Mammary epithelial cell (primary cell): ENCODE measurements at regions of chr20 and their contacts with region 1.

Region 1: GRCh38 chr20:56400090-56400542 is 7.7 kb downstream of the CSTF1 start:
- DNase-seq: peak; percentile 34
- H3K4me3 ChIP-seq: no peak overlapping the region
- H3K27ac ChIP-seq: no peak overlapping the region
- H3K4me1 ChIP-seq: no peaks in the 10 kb centered on the region
- H3K27me3 ChIP-seq: no peaks in the 10 kb centered on the region
- CTCF ChIP-seq: peak; percentile 82 to 88

Region 2: DNA sequence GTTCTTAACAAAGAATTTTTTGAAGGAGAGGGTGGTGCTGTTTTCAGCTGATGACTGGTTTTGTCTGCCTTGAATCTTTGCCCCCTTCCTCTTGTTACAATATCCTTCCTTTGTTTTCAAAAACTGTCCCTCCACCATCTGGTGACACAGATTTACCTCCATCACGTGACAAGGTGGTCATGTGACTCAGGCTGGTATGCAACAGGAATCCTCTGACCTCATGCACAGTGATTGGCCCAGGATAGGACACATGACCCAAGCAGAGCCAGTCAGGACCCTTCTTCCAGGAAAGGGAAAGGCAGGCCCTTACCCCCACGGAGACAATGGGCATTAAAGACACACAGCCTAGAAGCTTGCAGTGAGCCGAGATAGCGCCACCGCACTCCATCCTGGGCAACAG is 236.3 kb before region 1 on chr20:
- CTCF ChIA-PET with region 1: no interaction called
- dilution Hi-C with region 1: no loop called
- in situ Hi-C with region 1: no loop called
- intact Hi-C with region 1: no loop called
- DNase-seq: no peak
- H3K4me3 ChIP-seq: no peak overlapping the region
- H3K27ac ChIP-seq: no peak overlapping the region
- H3K4me1 ChIP-seq: no peaks in the 10 kb centered on the region
- H3K27me3 ChIP-seq: no peaks in the 10 kb centered on the region
- CTCF ChIP-seq: no peak

Region 3: DNA sequence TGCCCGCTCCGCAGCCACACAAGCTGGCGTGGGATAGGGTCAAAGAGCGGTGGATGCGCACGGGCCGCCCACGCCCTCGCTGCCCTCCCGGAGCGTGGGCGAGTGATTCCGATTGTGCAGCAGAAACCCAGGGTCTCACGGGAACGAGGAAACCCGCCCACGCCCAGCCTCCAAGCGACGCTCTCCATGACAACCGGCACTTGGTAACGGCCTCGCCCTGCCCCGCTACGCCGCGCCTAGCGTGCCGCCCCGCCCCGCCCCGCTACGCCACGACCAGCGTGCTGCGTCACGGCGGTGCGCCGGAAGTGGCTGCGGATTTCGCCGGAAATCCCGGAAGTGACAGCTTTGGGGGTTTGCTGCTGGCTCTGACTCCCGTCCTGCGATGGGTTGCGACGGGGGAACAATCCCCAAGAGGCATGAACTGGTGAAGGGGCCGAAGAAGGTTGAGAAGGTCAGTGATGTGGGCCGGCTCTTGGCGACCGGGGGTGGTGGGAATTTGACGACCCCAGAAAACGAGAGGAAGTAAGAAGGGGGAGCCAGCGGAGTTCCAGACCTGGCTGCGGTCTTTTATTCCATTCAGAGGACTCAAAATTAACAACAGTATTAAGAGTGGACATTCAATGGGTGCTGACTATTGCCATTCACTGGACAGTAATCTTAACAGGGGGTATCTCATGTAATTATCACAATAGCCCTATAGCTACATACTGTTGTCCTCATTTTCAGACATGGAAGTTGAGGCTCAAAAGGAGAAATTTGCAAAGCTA is 68.4 kb after region 1 on chr20 and contains the start of gene RTF2:
- CTCF ChIA-PET with region 1: no interaction called
- dilution Hi-C with region 1: no loop called
- in situ Hi-C with region 1: no loop called
- intact Hi-C with region 1: loop called (anchors 2 kb)
- DNase-seq: peak; percentile 91
- H3K4me3 ChIP-seq: peak within 1 kb of the TSS; percentile 78 to 99 (median 97)
- H3K27ac ChIP-seq: peak within 1 kb of the TSS; percentile 95
- H3K4me1 ChIP-seq: peaks cover 14% of the 10 kb centered on the region
- H3K27me3 ChIP-seq: no peaks in the 10 kb centered on the region
- CTCF ChIP-seq: no peak
- total RNA-seq, gene RTF2: 46.2 to 66.2 TPM

Region 4: GRCh38 chr20:56497326-56497725 is 97.2 kb after region 1 on chr20:
- CTCF ChIA-PET with region 1: no interaction called
- dilution Hi-C with region 1: no loop called
- in situ Hi-C with region 1: no loop called
- intact Hi-C with region 1: loop called (anchors 10 kb)
- DNase-seq: no peak
- H3K4me3 ChIP-seq: no peak overlapping the region
- H3K27ac ChIP-seq: no peak overlapping the region
- H3K4me1 ChIP-seq: no peaks in the 10 kb centered on the region
- H3K27me3 ChIP-seq: no peaks in the 10 kb centered on the region
- CTCF ChIP-seq: no peak

Region 5: GRCh38 chr20:57048027-57048869 is 648.1 kb after region 1 on chr20:
- CTCF ChIA-PET with region 1: no interaction called
- dilution Hi-C with region 1: no loop called
- in situ Hi-C with region 1: no loop called
- intact Hi-C with region 1: loop called (anchors 10 kb)
- DNase-seq: peak; percentile 37
- H3K4me3 ChIP-seq: no peak overlapping the region
- H3K27ac ChIP-seq: no peak overlapping the region
- H3K4me1 ChIP-seq: peaks cover 19% of the 10 kb centered on the region
- H3K27me3 ChIP-seq: no peaks in the 10 kb centered on the region
- CTCF ChIP-seq: peak; percentile 76 to 78